BJ (cell line): ENCODE measurements at regions of chr2 and their contacts with region 1.

Region 1: DNA sequence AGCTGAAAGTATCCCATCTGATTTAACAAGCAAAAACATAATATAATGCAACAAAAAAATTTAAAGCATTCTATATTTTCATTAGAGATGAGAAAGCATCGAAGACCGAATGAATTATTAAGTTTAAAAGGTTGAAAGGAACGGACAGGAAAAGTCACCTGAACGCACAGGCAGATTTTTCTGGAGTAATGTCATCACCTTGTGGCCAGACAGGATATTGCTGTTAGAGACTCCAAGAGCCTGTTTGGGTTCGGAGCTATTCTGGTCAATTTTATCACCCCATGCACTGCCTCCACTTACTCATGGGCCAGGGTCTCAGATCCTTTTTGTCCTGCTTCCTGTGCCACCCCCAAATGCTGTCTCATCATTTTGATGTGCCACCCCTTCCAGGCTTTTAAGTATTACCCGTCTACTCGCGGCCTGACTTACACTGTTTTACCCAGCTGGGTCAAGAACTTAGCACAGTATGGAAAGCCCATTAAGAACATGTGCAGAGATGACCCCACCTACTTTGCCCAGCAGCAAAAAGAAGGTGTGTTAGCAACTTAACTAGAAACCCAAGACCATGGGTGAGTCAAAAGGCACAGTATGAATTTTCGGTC is 27.3 kb downstream of the GKN2 start:
- DNase-seq: no peak
- H3K4me3 ChIP-seq: no peak overlapping the region
- H3K27me3 ChIP-seq: peaks cover 2% of the 10 kb centered on the region
- CTCF ChIP-seq: peak; percentile 88

Region 2: GRCh38 chr2:68742626-68743415 is 182.6 kb before region 1 on chr2:
- CTCF ChIA-PET with region 1: interaction called, 68 read pairs
- POLR2A ChIA-PET with region 1: no interaction called
- DNase-seq: no peak
- H3K4me3 ChIP-seq: no peak overlapping the region
- H3K27me3 ChIP-seq: no peaks in the 10 kb centered on the region
- CTCF ChIP-seq: no peak

Region 3: DNA sequence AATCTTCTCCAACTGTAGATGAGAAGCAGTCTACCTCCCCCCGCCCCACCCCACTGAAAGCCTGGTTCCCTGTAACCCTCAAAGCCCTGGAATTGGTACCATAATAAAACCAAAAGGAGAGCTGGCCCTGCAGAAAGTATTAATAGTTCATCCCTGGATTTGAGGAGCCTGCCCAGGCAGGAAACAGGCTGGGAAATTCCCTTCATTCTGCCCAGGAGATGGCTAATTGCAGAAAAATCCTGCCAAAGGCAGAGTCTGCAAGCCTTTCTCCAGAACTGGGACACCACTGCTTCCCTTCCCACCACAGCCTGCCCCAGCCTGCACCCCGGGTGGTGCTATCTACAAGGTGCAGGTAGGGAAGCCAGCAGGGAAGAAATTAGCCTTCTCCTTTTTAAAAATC is 11.0 kb after region 1 on chr2:
- CTCF ChIA-PET with region 1: interaction called, 21 read pairs
- POLR2A ChIA-PET with region 1: no interaction called
- DNase-seq: no peak
- H3K4me3 ChIP-seq: no peak overlapping the region
- H3K27me3 ChIP-seq: no peaks in the 10 kb centered on the region; the same call in 1 of the 2 replicates
- CTCF ChIP-seq: no peak